CD8-positive, alpha-beta T cell (primary cell): ENCODE measurements at regions of chr7 and their contacts with region 1.

Region 1: DNA sequence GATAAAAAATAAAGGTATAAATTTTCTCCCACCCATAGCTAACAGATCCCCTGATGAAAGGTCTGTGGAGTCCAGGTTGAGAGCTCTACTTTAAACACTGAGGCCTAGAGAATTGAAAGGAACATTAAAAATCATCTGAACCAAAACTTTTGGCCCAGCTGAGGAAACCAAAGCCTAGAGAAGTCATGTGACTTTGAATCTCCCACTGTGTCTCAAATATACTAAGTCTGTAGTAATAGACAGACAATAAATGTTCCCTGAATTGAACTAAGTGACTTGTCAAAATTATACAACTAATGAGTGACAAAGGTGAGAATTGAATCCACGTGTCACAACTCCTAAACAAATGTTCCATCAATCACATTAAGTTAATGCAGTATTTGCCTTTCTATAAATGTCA is 5.7 kb downstream of the GBX1 start:
- DNase-seq: no peak
- ATAC-seq: no peak
- H3K4me3 ChIP-seq: no peak overlapping the region
- H3K4me3 Mint-ChIP-seq: no peak overlapping the region
- H3K27ac ChIP-seq: no peak overlapping the region
- H3K27ac Mint-ChIP-seq: no peak overlapping the region
- H3K4me1 ChIP-seq: peaks cover 3% of the 10 kb centered on the region
- H3K4me1 Mint-ChIP-seq: peaks cover 2% of the 10 kb centered on the region
- H3K27me3 ChIP-seq: peaks cover 13 to 16% of the 10 kb centered on the region in 2 experiments
- H3K27me3 Mint-ChIP-seq: peaks cover 19% of the 10 kb centered on the region
- CTCF ChIP-seq: no peak

Region 2: GRCh38 chr7:151198945-151199848 is 37.4 kb after region 1 on chr7:
- CTCF ChIA-PET with region 1: no interaction called
- POLR2A ChIA-PET with region 1: no interaction called
- intact Hi-C with region 1: no loop called
- DNase-seq: no peak
- ATAC-seq: no peak
- H3K4me3 ChIP-seq: no peak overlapping the region
- H3K4me3 Mint-ChIP-seq: no peak overlapping the region
- H3K27ac ChIP-seq: no peak overlapping the region
- H3K27ac Mint-ChIP-seq: no peak overlapping the region
- H3K4me1 ChIP-seq: peaks cover 2% of the 10 kb centered on the region
- H3K4me1 Mint-ChIP-seq: peaks cover 3% of the 10 kb centered on the region
- H3K27me3 ChIP-seq: peaks cover 0 to 8% of the 10 kb centered on the region in 2 experiments
- H3K27me3 Mint-ChIP-seq: peaks cover 11% of the 10 kb centered on the region
- CTCF ChIP-seq: no peak

Region 3: GRCh38 chr7:151210087-151210854 is 48.5 kb after region 1 on chr7 and contains the start of gene H2BK1:
- CTCF ChIA-PET with region 1: no interaction called
- POLR2A ChIA-PET with region 1: no interaction called
- intact Hi-C with region 1: loop called in 1 of 2 experiments (anchors 5 kb)
- DNase-seq: no peak
- ATAC-seq: no peak
- H3K4me3 ChIP-seq: no peak within 1 kb of the TSS
- H3K4me3 Mint-ChIP-seq: no peak within 1 kb of the TSS
- H3K27ac ChIP-seq: no peak within 1 kb of the TSS
- H3K27ac Mint-ChIP-seq: no peak within 1 kb of the TSS
- H3K4me1 ChIP-seq: peaks cover 24% of the 10 kb centered on the region
- H3K4me1 Mint-ChIP-seq: peaks cover 24% of the 10 kb centered on the region
- H3K27me3 ChIP-seq: no peaks in the 10 kb centered on the region
- H3K27me3 Mint-ChIP-seq: no peaks in the 10 kb centered on the region
- CTCF ChIP-seq: no peak
- total RNA-seq, gene H2BK1: 1.5 to 1.6 TPM

Region 4: DNA sequence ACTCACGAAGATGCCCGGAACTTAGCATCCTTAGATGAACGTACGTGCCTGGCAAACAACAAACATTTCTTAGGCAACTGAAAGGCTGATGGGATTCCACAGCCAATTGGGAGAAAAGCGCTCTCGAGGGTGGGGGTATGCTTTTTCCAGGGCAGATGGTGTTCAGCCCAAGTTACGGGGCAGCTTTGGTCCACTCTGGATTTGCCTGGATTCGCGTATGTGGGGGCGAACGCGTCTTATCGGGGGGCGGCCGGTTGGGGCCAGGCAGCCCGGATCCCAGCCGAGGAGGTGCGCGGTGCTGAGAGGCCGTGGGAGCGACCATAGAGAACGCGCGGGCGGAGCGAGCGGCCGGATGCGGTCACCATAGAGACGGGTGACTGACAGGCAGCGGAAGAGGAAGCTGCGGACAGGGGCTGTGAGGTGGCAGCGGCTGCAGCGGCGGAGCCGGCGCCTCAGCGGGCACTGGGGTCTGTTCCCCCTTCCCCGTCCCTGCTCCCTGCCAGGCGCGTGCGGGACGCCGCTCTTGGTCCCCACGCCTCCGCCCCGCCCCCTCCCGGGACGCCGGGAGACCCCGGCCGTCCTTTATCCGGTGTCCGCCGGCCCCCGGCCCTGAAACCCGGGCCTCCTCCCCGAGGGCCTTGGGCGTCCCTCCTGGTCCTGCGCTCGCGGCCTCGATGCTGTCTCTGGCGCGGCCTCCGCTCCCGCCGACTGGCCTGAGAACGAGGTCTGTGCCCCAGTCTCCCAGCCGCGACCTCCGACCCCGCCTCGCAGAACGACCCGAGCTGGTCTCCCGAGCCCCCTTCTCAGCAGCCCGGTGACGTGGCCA is 70.5 kb after region 1 on chr7 and contains the start of gene CHPF2:
- CTCF ChIA-PET with region 1: no interaction called
- POLR2A ChIA-PET with region 1: no interaction called
- intact Hi-C with region 1: no loop called
- DNase-seq: peak; percentile 71 to 94 (median 92)
- ATAC-seq: peak; percentile 74
- H3K4me3 ChIP-seq: peak within 1 kb of the TSS; percentile 76 to 96
- H3K4me3 Mint-ChIP-seq: peak within 1 kb of the TSS; percentile 100
- H3K27ac ChIP-seq: peak within 1 kb of the TSS; percentile 54 to 59
- H3K27ac Mint-ChIP-seq: peak within 1 kb of the TSS; percentile 98
- H3K4me1 ChIP-seq: peaks cover 22% of the 10 kb centered on the region
- H3K4me1 Mint-ChIP-seq: peaks cover 35% of the 10 kb centered on the region
- H3K27me3 ChIP-seq: no peaks in the 10 kb centered on the region
- H3K27me3 Mint-ChIP-seq: no peaks in the 10 kb centered on the region
- CTCF ChIP-seq: no peak
- total RNA-seq, gene CHPF2: 24.7 to 24.9 TPM